Heart left ventricle (tissue), 16 donors: ENCODE measurements at regions of chr9 and their contacts with region 1.

Region 1: DNA sequence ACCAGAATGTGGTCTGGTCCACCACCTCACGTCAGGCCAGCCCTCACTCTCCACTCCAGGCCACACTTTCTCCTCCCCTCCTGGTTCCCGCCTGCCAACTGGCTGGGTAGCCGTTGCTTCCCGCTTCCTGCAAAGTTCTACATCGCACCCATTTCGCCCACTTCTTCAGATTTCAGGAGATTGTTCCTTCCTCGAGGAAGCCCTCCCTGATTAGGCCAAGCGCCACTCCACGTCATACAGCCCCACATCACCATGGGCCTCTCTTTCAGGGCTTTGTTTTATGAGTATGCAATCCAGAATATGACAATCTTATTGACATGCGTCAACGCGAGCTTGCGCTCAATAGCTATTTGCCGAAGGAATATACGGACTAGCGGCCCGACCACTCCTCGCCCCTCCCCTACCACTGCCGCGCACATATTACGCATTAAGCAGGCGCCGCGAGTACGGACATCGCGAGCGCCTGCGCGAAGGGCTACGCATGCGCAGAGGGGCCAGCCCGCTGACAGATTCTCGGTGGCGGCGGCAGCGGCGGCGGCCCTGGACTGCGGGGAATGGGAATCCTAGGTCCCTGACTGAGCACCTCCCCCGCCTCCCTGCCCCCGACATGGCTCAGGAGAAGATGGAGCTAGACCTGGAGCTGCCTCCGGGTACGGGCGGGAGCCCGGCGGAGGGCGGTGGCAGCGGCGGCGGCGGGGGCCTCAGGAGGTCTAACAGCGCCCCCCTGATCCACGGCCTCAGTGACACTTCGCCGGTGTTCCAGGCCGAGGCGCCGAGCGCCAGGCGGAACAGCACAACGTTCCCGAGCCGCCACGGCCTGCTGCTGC is 74.7 kb downstream of the PIP5K1B start:
- DNase-seq: peak; percentile 95 to 98 (median 97)
- ATAC-seq: peak; percentile 88 to 95 (median 94)
- H3K4me3 ChIP-seq: peak overlapping the region; percentile 49 to 89 (median 74)
- H3K27ac ChIP-seq: peak overlapping the region; percentile 83 to 97 (median 94)
- H3K4me1 ChIP-seq: peaks cover 8 to 77% (median 60%) of the 10 kb centered on the region in 12 donors
- H3K27me3 ChIP-seq: no peaks in the 10 kb centered on the region
- CTCF ChIP-seq: peak in 9 of 12 donors; percentile 28 to 67 (median 43)
- POLR2A ChIP-seq: peak; percentile 43 to 93

Region 2: DNA sequence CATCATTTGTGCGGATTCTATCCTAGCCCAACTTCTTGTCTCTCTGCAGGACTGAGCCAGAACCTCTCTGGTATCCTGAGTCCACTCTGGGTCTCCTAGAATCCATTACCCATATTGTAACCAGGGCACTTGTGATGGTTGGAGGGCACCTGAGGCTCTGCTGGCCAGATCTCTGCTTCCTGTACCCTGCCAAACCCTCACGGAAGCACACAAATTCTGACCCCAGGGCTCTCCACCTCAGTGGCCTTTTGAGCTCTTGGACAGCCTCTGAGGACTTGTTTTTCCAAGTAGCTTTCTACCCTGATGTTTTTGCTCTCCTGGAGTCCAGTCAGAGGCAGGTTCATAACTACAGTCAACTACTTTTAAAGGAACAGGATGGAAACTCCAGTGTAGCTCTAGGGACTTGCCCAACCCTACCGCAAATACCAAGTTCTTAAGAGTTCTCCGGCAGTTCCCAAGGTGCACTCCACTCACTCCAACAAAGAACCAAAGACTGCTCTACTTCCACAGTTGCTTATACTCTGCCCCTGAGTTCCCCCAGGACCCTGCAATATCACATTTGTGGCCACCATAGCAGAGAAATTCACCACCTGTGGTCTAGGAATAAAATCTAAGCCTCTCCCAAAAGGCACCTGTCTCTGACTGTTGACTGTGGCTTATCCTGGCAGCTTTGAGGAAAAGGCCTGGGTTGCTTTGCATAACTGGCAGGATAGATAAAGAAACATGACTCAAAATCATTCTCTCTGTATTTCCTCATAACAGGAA is 65.2 kb before region 1 on chr9:
- intact Hi-C with region 1: loop called in 5 of 10 experiments (anchors 5 kb)
- DNase-seq: no peak
- ATAC-seq: no peak
- H3K4me3 ChIP-seq: no peak overlapping the region
- H3K27ac ChIP-seq: no peak overlapping the region
- H3K4me1 ChIP-seq: peaks cover 0 to 44% (median 6%) of the 10 kb centered on the region in 12 donors
- H3K27me3 ChIP-seq: no peaks in the 10 kb centered on the region
- CTCF ChIP-seq: no peak
- POLR2A ChIP-seq: no peak

Region 3: DNA sequence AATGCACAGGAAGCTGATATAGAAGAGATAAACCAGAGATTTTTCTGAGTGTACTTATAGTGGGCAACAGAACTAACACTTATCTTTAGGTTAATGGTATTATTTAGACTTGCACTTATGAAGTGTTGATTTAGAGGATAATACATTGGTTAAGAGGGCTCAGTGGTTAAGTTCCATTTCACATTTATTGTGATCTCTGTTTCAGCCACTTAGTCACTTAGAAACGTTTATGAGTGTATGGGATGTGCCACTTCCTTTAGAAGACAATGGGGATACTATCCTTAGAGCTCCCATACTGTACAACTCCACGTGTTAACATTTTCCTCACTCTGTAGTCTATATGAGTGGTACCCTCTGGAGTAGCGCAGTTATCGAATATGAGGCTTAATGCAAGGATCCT is 17.2 kb before region 1 on chr9:
- intact Hi-C with region 1: loop called in 1 of 10 experiments (anchors 2 kb)
- DNase-seq: no peak
- ATAC-seq: peak in 1 of 4 donors; percentile 18
- H3K4me3 ChIP-seq: no peak overlapping the region
- H3K27ac ChIP-seq: no peak overlapping the region
- H3K4me1 ChIP-seq: peaks cover 0 to 44% (median 7%) of the 10 kb centered on the region in 12 donors
- H3K27me3 ChIP-seq: no peaks in the 10 kb centered on the region
- CTCF ChIP-seq: no peak
- POLR2A ChIP-seq: no peak

Region 4: GRCh38 chr9:68793605-68794343 is 14.0 kb after region 1 on chr9:
- intact Hi-C with region 1: no loop called
- DNase-seq: no peak
- ATAC-seq: peak in 1 of 4 donors; percentile 29
- H3K4me3 ChIP-seq: no peak overlapping the region
- H3K27ac ChIP-seq: no peak overlapping the region
- H3K4me1 ChIP-seq: peaks cover 0 to 35% (median 3%) of the 10 kb centered on the region in 12 donors
- H3K27me3 ChIP-seq: no peaks in the 10 kb centered on the region
- CTCF ChIP-seq: no peak
- POLR2A ChIP-seq: no peak

Region 5: DNA sequence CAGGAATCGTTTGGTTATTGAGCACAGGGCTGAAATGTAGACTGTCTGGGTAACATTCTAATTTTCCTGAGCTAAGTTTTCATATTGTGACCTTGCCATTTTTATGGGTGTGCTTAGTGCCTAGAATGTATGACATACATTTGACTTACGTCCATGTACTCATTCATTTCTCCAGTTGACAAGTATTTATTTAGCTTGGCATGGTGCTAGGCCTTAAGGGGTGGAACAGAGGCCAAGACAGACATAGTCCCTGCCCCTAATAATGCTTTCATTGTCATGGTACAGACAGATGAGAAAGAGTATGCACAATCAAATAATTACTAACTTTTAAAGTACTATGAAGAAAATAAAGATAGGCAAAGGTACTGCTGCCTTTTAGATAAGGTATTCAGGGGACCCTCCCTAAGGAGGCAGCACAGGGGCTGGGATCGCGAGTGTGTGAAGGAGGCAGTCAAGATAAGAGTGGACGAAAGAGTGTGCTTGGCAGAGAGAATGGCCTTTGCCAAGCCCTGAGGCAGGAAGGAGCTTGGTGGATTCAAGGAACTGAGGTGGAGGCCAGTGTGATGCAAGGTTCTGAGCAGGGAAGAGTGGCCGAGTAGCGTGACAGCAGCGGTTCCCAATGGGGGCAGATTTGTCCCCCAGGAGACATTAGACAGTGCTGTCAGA is 53.2 kb after region 1 on chr9:
- intact Hi-C with region 1: loop called in 1 of 10 experiments (anchors 5 kb)
- DNase-seq: no peak
- ATAC-seq: peak in 1 of 4 donors; percentile 18
- H3K4me3 ChIP-seq: no peak overlapping the region
- H3K27ac ChIP-seq: peak overlapping the region in 6 of 12 donors; percentile 3 to 42 (median 28)
- H3K4me1 ChIP-seq: peaks cover 0 to 47% (median 14%) of the 10 kb centered on the region in 12 donors
- H3K27me3 ChIP-seq: no peaks in the 10 kb centered on the region
- CTCF ChIP-seq: no peak
- POLR2A ChIP-seq: no peak

Region 6: DNA sequence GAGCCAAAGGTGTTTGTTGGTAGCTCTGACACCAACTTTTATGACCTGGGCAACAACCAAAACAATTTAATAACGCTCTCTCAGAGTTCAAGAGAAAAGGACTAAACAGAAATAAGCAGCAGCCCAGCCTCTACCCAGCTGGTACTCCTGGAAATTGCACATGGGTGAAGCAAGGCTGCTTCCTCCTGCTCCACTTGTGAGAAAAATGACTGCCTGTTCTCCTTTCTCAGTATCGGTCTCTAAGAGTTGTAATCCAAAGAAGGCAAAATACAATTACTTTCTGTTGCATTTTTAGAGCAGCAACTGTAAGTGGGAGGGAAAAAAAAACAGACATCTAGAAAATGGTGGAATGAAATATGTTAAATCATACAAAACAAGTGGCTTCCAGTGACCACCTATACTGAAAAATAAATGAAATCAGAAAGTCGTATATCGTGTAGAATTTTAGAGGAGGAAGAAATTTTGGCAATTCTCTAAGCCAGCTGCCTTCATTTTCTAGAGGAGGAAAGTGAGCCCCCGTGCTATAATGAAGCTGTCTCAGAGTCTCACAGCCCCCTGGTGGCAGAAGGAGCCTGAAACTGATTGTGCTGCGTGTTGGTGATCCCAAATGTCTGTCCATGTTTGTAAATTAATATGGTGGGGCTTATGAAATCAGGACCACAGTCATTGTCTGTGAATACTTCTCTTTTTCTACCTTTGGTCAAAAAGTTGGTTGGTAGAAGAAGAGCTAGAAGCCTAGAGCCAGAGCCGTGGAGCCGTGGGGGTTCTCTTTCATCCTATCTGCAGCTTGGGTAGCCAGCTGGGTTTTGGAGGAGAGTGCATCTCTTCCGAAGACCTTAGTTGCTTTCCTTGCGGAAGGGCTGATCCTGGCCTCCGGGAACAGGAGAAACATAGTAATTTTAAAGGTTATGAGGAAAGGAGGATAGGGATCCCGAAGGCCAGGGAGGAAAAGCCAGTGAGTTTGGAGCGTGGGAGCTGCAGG is 65.2 kb after region 1 on chr9:
- intact Hi-C with region 1: loop called in 1 of 10 experiments (anchors 5 kb)
- DNase-seq: peak in 2 of 5 donors; percentile 33 to 48
- ATAC-seq: peak in 3 of 4 donors; percentile 40 to 62 (median 48)
- H3K4me3 ChIP-seq: peak overlapping the region in 2 of 12 donors; percentile 25 to 37
- H3K27ac ChIP-seq: peak overlapping the region in 1 of 12 donors; percentile 78
- H3K4me1 ChIP-seq: peaks cover 0 to 35% (median 12%) of the 10 kb centered on the region in 12 donors
- H3K27me3 ChIP-seq: no peaks in the 10 kb centered on the region
- CTCF ChIP-seq: peak; percentile 16 to 65 (median 48)
- POLR2A ChIP-seq: no peak